ENCODE measurements at regions of chr5 and their contacts with region 1.

Region 1: GRCh38 chr5:111158105-111158744 is 66.0 kb upstream of the CAMK4 start:
- DNase-seq: peak; percentile 66

Region 2: GRCh38 chr5:111278845-111279504 is 120.8 kb after region 1 on chr5:
- CTCF ChIA-PET with region 1: interaction called, 11 read pairs
- POLR2A ChIA-PET with region 1: no interaction called
- DNase-seq: peak; percentile 69